MCF 10A (cell line): ENCODE measurements at regions of chr2 and their contacts with region 1.

Region 1: GRCh38 chr2:43576981-43577892 is 18.6 kb downstream of the THADA start:
- DNase-seq: peak; percentile 69
- H3K4me3 Mint-ChIP-seq: no peak overlapping the region
- H3K27ac Mint-ChIP-seq: no peak overlapping the region
- H3K4me1 Mint-ChIP-seq: no peaks in the 10 kb centered on the region
- H3K27me3 Mint-ChIP-seq: no peaks in the 10 kb centered on the region
- CTCF ChIP-seq: peak; percentile 48

Region 2: DNA sequence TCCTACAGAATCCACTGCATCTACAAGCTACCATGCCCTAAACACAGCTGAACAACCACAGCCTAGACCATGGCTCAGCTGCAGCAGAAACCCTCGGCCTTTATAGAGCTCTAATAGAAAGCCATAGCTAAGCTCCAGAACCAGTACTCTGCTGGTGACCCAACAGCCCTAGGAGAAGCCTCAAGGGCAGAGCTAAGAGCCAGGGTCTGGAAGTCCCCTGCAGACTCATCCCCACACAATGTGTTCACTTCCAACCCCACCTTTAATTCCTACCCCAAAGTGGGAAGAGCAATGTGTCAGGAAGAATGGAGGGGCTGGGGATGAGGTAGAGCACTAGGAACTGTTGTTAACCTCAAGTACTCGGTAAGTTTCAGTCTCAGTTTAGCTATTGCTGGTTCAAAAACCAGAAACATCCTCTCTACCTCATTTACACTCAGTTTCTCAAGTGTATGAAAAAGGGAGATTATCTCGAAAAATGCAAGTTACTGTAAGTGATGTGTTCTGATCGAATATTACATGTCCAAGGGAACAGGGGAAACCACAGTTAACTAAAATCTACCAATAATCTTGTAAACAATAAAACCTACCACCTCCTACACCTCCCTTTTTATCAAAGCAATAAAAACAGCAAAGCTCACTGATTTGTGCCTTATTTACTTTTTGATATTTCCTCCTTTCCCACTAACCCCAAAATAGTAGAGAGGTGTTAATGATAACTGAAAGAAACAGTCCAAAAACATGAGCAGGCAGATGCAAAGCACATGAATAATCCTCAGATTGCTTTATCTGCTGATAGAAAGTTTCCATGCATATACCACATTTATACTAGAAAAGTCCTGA is 17.6 kb before region 1 on chr2:
- CTCF ChIA-PET with region 1: interaction called, 11 read pairs
- POLR2A ChIA-PET with region 1: interaction called, 3 read pairs
- intact Hi-C with region 1: no loop called
- DNase-seq: no peak
- H3K4me3 Mint-ChIP-seq: no peak overlapping the region
- H3K27ac Mint-ChIP-seq: no peak overlapping the region
- H3K4me1 Mint-ChIP-seq: no peaks in the 10 kb centered on the region
- H3K27me3 Mint-ChIP-seq: no peaks in the 10 kb centered on the region
- CTCF ChIP-seq: no peak

Region 3: DNA sequence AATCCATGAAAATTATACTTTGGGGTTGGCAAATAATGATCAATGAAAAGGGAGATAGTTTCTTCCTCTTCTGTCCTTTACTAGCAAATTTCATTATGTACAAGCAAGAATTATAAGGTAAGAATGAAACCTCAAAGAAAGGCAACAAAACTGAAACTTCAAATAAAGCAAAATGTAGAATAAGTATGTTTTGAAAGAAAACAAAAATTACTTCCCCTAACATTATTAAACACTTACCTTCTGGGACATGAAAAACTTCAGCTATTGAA is 10.8 kb before region 1 on chr2:
- CTCF ChIA-PET with region 1: interaction called, 23 read pairs
- POLR2A ChIA-PET with region 1: interaction called, 4 read pairs
- intact Hi-C with region 1: no loop called
- DNase-seq: no peak
- H3K4me3 Mint-ChIP-seq: no peak overlapping the region
- H3K27ac Mint-ChIP-seq: no peak overlapping the region
- H3K4me1 Mint-ChIP-seq: no peaks in the 10 kb centered on the region
- H3K27me3 Mint-ChIP-seq: no peaks in the 10 kb centered on the region
- CTCF ChIP-seq: no peak